Naive thymus-derived CD4-positive, alpha-beta T cell (primary cell): ENCODE measurements at regions of chr6 and their contacts with region 1.

Region 1: DNA sequence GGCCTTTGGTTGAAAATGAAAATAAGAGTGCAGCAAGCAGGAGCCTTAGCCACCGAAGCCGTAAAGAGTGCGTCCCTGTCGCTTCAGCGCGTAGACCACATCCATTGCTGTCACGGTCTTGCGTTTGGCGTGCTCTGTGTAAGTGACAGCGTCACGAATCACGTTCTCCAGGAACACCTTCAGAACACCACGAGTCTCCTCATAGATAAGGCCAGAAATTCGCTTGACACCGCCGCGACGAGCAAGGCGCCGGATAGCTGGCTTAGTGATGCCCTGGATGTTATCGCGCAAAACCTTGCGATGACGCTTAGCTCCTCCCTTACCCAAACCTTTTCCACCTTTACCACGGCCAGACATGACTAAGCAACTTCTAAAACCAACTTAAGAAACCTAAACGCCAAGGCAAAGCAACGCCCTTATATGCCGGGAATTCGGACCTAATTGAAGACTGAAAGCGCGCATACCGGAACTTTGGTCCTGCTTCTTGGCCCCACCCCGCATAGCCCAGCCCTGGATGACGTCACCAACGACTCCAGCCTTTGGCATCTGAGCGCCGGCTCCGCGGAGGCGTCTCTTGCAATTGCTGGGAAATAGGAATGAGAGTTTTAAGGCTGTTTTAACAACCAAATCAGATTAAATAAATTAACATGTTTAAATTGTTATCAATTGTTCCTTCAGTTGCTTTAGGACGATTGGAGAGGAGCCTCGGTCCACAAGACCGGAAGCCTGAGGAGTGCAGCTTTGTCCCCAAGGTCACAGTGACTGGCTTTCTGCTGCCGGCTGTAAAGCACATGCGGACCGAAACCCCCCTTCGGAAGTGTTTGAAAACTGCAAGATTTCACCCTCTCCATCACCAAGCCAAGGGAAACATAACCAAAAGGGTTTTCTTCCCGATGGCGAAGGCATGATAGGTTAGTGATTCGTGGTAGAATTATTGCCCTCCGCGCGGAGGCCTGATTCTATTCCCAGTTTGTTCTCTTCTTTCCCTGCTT is 79.6 kb upstream of the BTN3A2 start:
- DNase-seq: peak; percentile 72 to 97 (median 92)
- ATAC-seq: peak; percentile 91
- H3K4me3 ChIP-seq: peak overlapping the region; percentile 88
- H3K4me3 Mint-ChIP-seq: peak overlapping the region; percentile 86 to 96 (median 90)
- H3K27ac ChIP-seq: peak overlapping the region; percentile 91
- H3K27ac Mint-ChIP-seq: peak overlapping the region; percentile 91 to 100 (median 98)
- H3K4me1 ChIP-seq: peaks cover 0 to 8% of the 10 kb centered on the region in 2 donors
- H3K4me1 Mint-ChIP-seq: peaks cover 7 to 48% (median 33%) of the 10 kb centered on the region in 7 donors
- H3K27me3 ChIP-seq: no peaks in the 10 kb centered on the region
- H3K27me3 Mint-ChIP-seq: peaks cover 0 to 9% (median 5%) of the 10 kb centered on the region in 5 donors

Region 2: DNA sequence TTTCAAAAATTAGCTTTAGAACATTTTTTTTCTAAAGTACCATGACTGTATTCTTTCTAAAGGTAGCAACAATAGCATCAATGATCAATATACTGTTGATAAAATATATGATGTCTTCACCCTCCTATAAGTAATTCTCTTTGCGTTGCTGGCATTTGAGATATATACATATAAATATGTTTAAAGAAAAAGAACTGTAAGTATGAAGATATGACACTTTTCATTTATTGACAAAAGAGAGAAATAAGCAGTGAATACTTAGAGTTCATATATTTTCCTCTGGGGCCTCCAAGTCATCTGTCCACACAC is 682.8 kb before region 1 on chr6:
- CTCF ChIA-PET with region 1: no interaction called
- POLR2A ChIA-PET with region 1: no interaction called
- intact Hi-C with region 1: no loop called
- DNase-seq: no peak
- ATAC-seq: no peak
- H3K4me3 ChIP-seq: no peak overlapping the region
- H3K4me3 Mint-ChIP-seq: no peak overlapping the region
- H3K27ac ChIP-seq: no peak overlapping the region
- H3K27ac Mint-ChIP-seq: no peak overlapping the region
- H3K4me1 ChIP-seq: no peaks in the 10 kb centered on the region
- H3K4me1 Mint-ChIP-seq: peaks cover 0 to 19% (median 6%) of the 10 kb centered on the region in 7 donors
- H3K27me3 ChIP-seq: no peaks in the 10 kb centered on the region
- H3K27me3 Mint-ChIP-seq: no peaks in the 10 kb centered on the region

Region 3: GRCh38 chr6:26045065-26045927 is 240.1 kb before region 1 on chr6:
- CTCF ChIA-PET with region 1: no interaction called
- POLR2A ChIA-PET with region 1: interaction called, 7 read pairs
- intact Hi-C with region 1: loop called in 1 of 2 experiments (anchors 1 kb)
- DNase-seq: peak; percentile 39 to 93 (median 89)
- ATAC-seq: peak; percentile 68
- H3K4me3 ChIP-seq: peak overlapping the region; percentile 91
- H3K4me3 Mint-ChIP-seq: peak overlapping the region; percentile 87 to 98 (median 94)
- H3K27ac ChIP-seq: peak overlapping the region; percentile 90
- H3K27ac Mint-ChIP-seq: peak overlapping the region; percentile 80 to 98 (median 95)
- H3K4me1 ChIP-seq: peaks cover 7 to 19% of the 10 kb centered on the region in 2 donors
- H3K4me1 Mint-ChIP-seq: peaks cover 8 to 51% (median 20%) of the 10 kb centered on the region in 7 donors
- H3K27me3 ChIP-seq: no peaks in the 10 kb centered on the region
- H3K27me3 Mint-ChIP-seq: peaks cover 0 to 3% (median 0%) of the 10 kb centered on the region in 5 donors

Region 4: DNA sequence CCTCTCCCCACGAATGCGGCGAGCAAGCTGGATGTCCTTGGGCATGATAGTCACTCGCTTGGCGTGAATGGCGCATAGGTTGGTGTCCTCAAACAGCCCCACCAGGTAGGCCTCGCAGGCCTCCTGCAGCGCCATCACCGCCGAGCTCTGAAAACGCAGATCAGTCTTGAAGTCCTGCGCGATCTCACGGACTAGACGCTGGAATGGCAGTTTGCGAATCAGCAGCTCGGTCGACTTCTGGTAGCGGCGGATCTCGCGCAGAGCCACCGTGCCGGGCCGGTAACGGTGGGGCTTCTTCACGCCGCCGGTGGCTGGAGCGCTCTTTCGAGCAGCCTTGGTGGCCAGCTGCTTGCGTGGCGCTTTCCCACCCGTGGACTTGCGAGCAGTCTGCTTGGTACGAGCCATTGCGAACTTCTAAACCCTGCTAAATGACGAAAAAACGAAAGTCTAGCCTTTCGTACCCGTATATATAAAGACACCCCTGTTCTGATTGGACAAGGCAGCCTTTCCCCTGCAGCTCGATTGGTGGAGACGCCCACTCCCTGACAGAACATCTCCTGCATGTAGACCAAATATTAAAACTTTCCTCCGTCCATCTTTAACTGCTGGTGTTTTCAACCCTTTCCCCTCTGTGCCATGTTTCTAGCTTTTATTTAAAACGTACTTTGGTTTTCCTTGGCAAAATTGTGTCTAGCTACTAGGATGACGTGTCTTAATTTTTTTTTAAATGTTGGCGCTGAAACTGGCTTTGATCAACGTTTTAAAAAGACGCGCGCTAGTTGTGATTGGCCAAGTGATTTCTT is 88.4 kb before region 1 on chr6:
- CTCF ChIA-PET with region 1: interaction called, 4 read pairs
- POLR2A ChIA-PET with region 1: interaction called, 161 read pairs
- intact Hi-C with region 1: loop called in 1 of 2 experiments (anchors 1 kb)
- DNase-seq: peak; percentile 55 to 95 (median 93)
- ATAC-seq: peak; percentile 73
- H3K4me3 ChIP-seq: peak overlapping the region; percentile 92
- H3K4me3 Mint-ChIP-seq: peak overlapping the region; percentile 85 to 99 (median 96)
- H3K27ac ChIP-seq: peak overlapping the region; percentile 91
- H3K27ac Mint-ChIP-seq: peak overlapping the region; percentile 96 to 100 (median 98)
- H3K4me1 ChIP-seq: peaks cover 10 to 12% of the 10 kb centered on the region in 2 donors
- H3K4me1 Mint-ChIP-seq: peaks cover 23 to 65% (median 42%) of the 10 kb centered on the region in 7 donors
- H3K27me3 ChIP-seq: no peaks in the 10 kb centered on the region
- H3K27me3 Mint-ChIP-seq: peaks cover 0 to 12% (median 0%) of the 10 kb centered on the region in 5 donors

Region 5: GRCh38 chr6:26240154-26241032 is 45.0 kb before region 1 on chr6:
- CTCF ChIA-PET with region 1: interaction called, 3 read pairs
- POLR2A ChIA-PET with region 1: interaction called, 139 read pairs
- intact Hi-C with region 1: loop called (anchors 1 kb)
- DNase-seq: peak; percentile 56 to 90 (median 78)
- ATAC-seq: peak; percentile 87
- H3K4me3 ChIP-seq: peak overlapping the region; percentile 55
- H3K4me3 Mint-ChIP-seq: peak overlapping the region; percentile 80 to 93 (median 89)
- H3K27ac ChIP-seq: peak overlapping the region; percentile 83
- H3K27ac Mint-ChIP-seq: peak overlapping the region; percentile 89 to 99 (median 96)
- H3K4me1 ChIP-seq: peaks cover 6 to 11% of the 10 kb centered on the region in 2 donors
- H3K4me1 Mint-ChIP-seq: peaks cover 8 to 37% (median 25%) of the 10 kb centered on the region in 7 donors
- H3K27me3 ChIP-seq: no peaks in the 10 kb centered on the region
- H3K27me3 Mint-ChIP-seq: no peaks in the 10 kb centered on the region

Region 6: GRCh38 chr6:26322645-26323482 is 37.4 kb after region 1 on chr6:
- CTCF ChIA-PET with region 1: no interaction called
- POLR2A ChIA-PET with region 1: interaction called, 16 read pairs
- intact Hi-C with region 1: loop called (anchors 1 to 2 kb)
- DNase-seq: peak in 8 of 9 donors; percentile 67 to 85 (median 79)
- ATAC-seq: peak; percentile 72
- H3K4me3 ChIP-seq: peak overlapping the region; percentile 82
- H3K4me3 Mint-ChIP-seq: peak overlapping the region; percentile 64 to 92 (median 88)
- H3K27ac ChIP-seq: peak overlapping the region; percentile 60
- H3K27ac Mint-ChIP-seq: peak overlapping the region; percentile 44 to 93 (median 89)
- H3K4me1 ChIP-seq: peaks cover 5 to 8% of the 10 kb centered on the region in 2 donors
- H3K4me1 Mint-ChIP-seq: peaks cover 2 to 58% (median 36%) of the 10 kb centered on the region in 7 donors
- H3K27me3 ChIP-seq: no peaks in the 10 kb centered on the region
- H3K27me3 Mint-ChIP-seq: peaks cover 5 to 21% (median 17%) of the 10 kb centered on the region in 5 donors

Region 7: GRCh38 chr6:26351544-26351953 is 66.1 kb after region 1 on chr6:
- CTCF ChIA-PET with region 1: no interaction called
- POLR2A ChIA-PET with region 1: no interaction called
- intact Hi-C with region 1: no loop called
- DNase-seq: no peak
- ATAC-seq: peak; percentile 72
- H3K4me3 ChIP-seq: no peak overlapping the region
- H3K4me3 Mint-ChIP-seq: no peak overlapping the region
- H3K27ac ChIP-seq: no peak overlapping the region
- H3K27ac Mint-ChIP-seq: no peak overlapping the region
- H3K4me1 ChIP-seq: no peaks in the 10 kb centered on the region
- H3K4me1 Mint-ChIP-seq: peaks cover 0 to 8% (median 0%) of the 10 kb centered on the region in 7 donors
- H3K27me3 ChIP-seq: no peaks in the 10 kb centered on the region
- H3K27me3 Mint-ChIP-seq: peaks cover 0 to 7% (median 0%) of the 10 kb centered on the region in 5 donors

Region 8: DNA sequence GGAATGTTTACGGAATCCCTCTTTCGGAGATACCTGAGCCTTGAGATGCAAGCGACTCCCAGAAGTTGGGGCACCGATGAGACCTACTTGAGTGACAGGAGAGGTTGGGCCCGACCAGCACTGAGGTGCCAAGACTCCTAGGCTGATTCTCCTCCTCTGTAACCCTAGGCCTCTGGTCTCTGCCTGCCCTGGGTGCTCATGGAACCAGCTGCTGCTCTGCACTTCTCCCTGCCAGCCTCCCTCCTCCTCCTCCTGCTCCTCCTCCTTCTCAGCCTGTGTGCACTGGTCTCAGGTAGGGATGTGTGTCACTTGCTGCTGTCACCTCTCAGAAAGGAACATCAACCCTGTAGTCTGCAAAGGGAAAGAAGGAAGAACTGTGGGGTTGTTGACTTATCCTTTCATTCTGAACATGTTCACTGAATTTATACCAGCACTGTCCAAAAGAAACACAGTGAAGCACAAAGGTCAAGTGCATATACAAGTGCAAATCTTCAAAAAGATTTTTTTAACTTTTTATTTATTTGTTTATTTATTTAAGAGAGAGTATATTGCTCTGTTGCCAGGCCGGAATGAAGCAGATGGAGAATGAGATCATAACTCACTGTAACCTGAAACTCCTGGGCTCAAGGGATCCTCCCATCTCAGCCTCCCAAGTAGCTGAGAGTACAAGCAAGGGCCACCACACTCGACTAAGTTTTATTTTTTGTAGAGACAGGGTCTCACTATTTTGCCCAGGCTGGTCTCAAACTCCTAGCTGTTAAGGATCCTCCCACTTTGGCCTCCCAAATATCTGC is 98.4 kb after region 1 on chr6:
- CTCF ChIA-PET with region 1: no interaction called
- POLR2A ChIA-PET with region 1: no interaction called
- intact Hi-C with region 1: no loop called
- DNase-seq: peak in 1 of 9 donors; percentile 20
- ATAC-seq: peak; percentile 9
- H3K4me3 ChIP-seq: peak overlapping the region; percentile 83
- H3K4me3 Mint-ChIP-seq: peak overlapping the region; percentile 91 to 100 (median 98)
- H3K27ac ChIP-seq: peak overlapping the region; percentile 96
- H3K27ac Mint-ChIP-seq: peak overlapping the region; percentile 81 to 99 (median 95)
- H3K4me1 ChIP-seq: peaks cover 8 to 16% of the 10 kb centered on the region in 2 donors
- H3K4me1 Mint-ChIP-seq: peaks cover 17 to 57% (median 33%) of the 10 kb centered on the region in 7 donors
- H3K27me3 ChIP-seq: no peaks in the 10 kb centered on the region
- H3K27me3 Mint-ChIP-seq: no peaks in the 10 kb centered on the region

Region 9: DNA sequence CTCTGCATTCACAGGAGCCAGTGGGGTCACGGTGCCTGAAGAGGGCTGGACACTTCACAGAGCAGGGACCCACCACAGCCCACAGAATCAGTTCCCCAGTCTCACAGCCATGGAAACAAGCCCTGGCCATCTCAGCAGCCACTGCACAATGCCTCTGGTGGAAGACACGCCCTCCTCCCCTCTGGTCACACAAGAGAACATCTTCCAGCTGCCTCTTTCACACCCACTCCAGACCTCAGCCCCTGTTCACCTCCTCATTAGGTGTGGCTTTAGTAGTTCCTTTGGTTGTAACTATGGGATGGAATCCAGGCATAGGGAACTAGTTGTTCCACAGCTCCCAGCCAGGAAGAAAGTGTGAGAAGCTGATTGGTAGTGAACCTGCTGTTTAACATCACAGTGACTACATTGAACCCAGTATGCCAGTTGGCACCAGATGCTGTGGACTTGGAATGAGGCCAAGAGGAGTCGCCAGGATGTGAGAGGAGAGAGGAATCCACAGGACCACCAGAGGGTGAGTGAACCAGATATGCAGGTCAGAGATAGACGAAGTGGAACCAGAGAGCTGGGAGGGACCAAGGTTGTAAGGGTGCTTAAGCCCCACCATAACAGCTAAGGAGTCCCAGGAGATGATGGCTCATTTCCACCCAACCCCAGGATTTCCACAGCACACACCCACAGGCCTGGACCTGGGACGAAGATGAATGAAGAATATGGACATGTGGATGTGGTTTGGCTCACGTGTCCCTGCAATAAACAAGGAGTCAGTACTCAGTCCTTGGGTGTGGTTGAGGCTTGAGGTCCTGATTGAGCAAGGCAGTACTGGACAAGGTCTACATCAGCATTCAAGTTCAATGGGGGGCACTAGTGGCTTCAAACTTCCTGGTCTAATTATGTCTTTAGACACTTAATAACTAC is 146.1 kb after region 1 on chr6:
- CTCF ChIA-PET with region 1: no interaction called
- POLR2A ChIA-PET with region 1: no interaction called
- intact Hi-C with region 1: no loop called
- DNase-seq: no peak
- ATAC-seq: no peak
- H3K4me3 ChIP-seq: no peak overlapping the region
- H3K4me3 Mint-ChIP-seq: no peak overlapping the region
- H3K27ac ChIP-seq: no peak overlapping the region
- H3K27ac Mint-ChIP-seq: no peak overlapping the region
- H3K4me1 ChIP-seq: no peaks in the 10 kb centered on the region
- H3K4me1 Mint-ChIP-seq: peaks cover 0 to 11% (median 0%) of the 10 kb centered on the region in 7 donors
- H3K27me3 ChIP-seq: no peaks in the 10 kb centered on the region
- H3K27me3 Mint-ChIP-seq: no peaks in the 10 kb centered on the region

Region 10: GRCh38 chr6:26568601-26569432 is 283.4 kb after region 1 on chr6:
- CTCF ChIA-PET with region 1: no interaction called
- POLR2A ChIA-PET with region 1: interaction called, 14 read pairs
- intact Hi-C with region 1: loop called in 1 of 2 experiments (anchors 1 kb)
- DNase-seq: peak; percentile 96 to 99 (median 98)
- ATAC-seq: peak; percentile 84
- H3K4me3 ChIP-seq: peak overlapping the region; percentile 90
- H3K4me3 Mint-ChIP-seq: peak overlapping the region; percentile 90 to 100 (median 95)
- H3K27ac ChIP-seq: peak overlapping the region; percentile 74
- H3K27ac Mint-ChIP-seq: peak overlapping the region; percentile 96 to 100 (median 99)
- H3K4me1 ChIP-seq: peaks cover 0 to 3% of the 10 kb centered on the region in 2 donors
- H3K4me1 Mint-ChIP-seq: peaks cover 11 to 42% (median 26%) of the 10 kb centered on the region in 7 donors
- H3K27me3 ChIP-seq: no peaks in the 10 kb centered on the region
- H3K27me3 Mint-ChIP-seq: peaks cover 0 to 12% (median 0%) of the 10 kb centered on the region in 5 donors